Activated CD4-positive, alpha-beta T cell treated with anti-CD3 and anti-CD28 coated beads, Interleukin-2, amount 10 ng/mL, durations not matched to agents 24 days and 14 days (primary cell): ENCODE measurements at regions of chr9 and their contacts with region 1.

Region 1: GRCh38 chr9:88388172-88388885 is at the start of gene SPIN1:
- DNase-seq: peak; percentile 95
- H3K4me3 Mint-ChIP-seq: peak within 1 kb of the TSS; percentile 92
- H3K27ac Mint-ChIP-seq: peak within 1 kb of the TSS; percentile 96
- H3K4me1 Mint-ChIP-seq: peaks cover 29% of the 10 kb centered on the region
- H3K27me3 Mint-ChIP-seq: peaks cover 1% of the 10 kb centered on the region
- total RNA-seq, gene SPIN1: 29.5 and 31.4 TPM in 2 replicates

Region 2: DNA sequence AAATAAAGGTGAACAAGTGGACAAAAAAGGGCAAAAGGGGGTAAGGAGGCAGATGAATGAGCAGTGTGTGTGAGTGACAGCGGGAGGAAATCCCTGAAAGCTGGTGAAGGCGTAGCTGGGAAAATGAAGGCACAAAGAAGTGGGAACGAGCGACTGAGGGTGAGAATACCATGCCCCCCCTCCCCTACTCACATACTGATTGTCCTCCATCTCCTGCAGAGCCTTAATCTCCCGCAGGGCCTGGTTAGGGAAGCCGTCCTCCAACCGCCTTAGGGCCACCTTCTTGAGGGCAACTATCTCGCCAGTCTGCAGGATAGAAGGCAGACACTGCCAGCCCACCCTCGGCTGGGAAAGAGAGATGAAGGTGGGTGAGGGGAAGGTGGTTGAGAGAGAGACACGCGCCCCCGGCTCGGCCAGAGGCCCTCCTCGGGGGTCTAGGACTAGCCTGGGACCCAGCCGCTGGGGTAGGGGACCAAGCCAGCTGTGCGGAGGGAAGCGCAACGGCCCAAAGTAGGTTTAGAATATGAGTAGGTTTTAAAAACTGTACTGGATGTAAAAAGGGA is 414.5 kb before region 1 on chr9:
- intact Hi-C with region 1: loop called (anchors 1 kb)
- DNase-seq: no peak
- H3K4me3 Mint-ChIP-seq: peak overlapping the region; percentile 95
- H3K27ac Mint-ChIP-seq: peak overlapping the region; percentile 92
- H3K4me1 Mint-ChIP-seq: peaks cover 12% of the 10 kb centered on the region
- H3K27me3 Mint-ChIP-seq: peaks cover 8% of the 10 kb centered on the region

Region 3: DNA sequence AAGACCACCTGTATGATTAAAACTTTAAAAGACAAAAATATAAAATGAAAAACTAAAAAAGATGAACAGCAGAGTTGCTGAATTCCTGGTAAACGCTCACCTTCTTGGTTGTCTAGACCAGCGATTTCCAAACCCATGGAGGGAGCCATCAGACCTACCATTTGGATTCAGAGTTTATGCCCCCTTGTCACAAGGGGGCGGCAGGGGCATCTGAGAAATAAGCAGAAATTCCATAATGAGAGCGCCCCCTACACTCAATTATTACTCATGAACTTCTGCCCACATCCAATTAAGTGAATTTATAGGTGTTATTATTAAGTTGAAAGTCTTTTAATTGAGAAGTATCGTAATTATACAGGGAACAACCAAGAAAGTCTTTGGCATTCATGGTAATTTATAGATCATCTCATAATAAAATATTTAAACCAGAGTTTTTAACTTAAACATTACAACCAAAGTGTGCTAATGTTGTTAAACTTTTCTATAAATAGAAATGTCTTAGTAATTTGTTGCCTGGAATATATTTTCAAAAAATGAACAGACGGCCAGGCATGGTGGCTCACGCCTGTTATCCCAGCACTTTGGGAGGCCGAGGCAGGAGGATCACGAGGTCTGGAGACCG is 214.8 kb before region 1 on chr9:
- intact Hi-C with region 1: loop called (anchors 10 kb)
- DNase-seq: peak; percentile 82
- H3K4me3 Mint-ChIP-seq: no peak overlapping the region
- H3K27ac Mint-ChIP-seq: no peak overlapping the region
- H3K4me1 Mint-ChIP-seq: peaks cover 5% of the 10 kb centered on the region
- H3K27me3 Mint-ChIP-seq: peaks cover 33% of the 10 kb centered on the region

Region 4: GRCh38 chr9:88313364-88314220 is 74.7 kb before region 1 on chr9:
- intact Hi-C with region 1: loop called (anchors 2 kb)
- DNase-seq: no peak
- H3K4me3 Mint-ChIP-seq: peak overlapping the region; percentile 39
- H3K27ac Mint-ChIP-seq: peak overlapping the region; percentile 86
- H3K4me1 Mint-ChIP-seq: peaks cover 45% of the 10 kb centered on the region
- H3K27me3 Mint-ChIP-seq: no peaks in the 10 kb centered on the region

Region 5: GRCh38 chr9:88476491-88477271 is 88.4 kb after region 1 on chr9:
- intact Hi-C with region 1: loop called (anchors 2 kb)
- DNase-seq: peak; percentile 58
- H3K4me3 Mint-ChIP-seq: no peak overlapping the region
- H3K27ac Mint-ChIP-seq: peak overlapping the region; percentile 79
- H3K4me1 Mint-ChIP-seq: peaks cover 15% of the 10 kb centered on the region
- H3K27me3 Mint-ChIP-seq: no peaks in the 10 kb centered on the region

Region 6: GRCh38 chr9:88628114-88628513 is 239.8 kb after region 1 on chr9:
- intact Hi-C with region 1: no loop called
- DNase-seq: no peak
- H3K4me3 Mint-ChIP-seq: no peak overlapping the region
- H3K27ac Mint-ChIP-seq: no peak overlapping the region
- H3K4me1 Mint-ChIP-seq: no peaks in the 10 kb centered on the region
- H3K27me3 Mint-ChIP-seq: no peaks in the 10 kb centered on the region

Region 7: DNA sequence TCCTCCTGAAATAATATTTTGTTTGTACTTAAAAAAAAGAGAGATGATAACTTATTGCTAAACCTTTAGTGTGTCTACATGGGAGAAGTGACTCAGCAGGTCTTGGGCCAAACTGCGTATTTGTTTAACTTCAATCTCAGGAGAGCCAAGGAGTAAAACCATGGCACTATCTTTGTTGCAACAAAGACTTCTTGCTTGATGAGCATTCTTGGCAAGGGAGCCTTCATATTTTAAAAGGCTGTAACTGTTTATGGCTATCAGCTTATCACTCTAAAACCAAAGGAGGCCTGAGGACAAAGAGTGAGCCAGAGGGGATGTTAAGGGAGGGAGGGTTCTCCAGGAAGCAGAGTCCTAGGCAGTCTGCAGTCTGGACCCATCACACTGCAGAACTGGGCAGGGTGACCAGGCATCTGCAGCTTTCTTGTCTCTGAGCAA is 386.7 kb after region 1 on chr9:
- intact Hi-C with region 1: no loop called
- DNase-seq: peak; percentile 40
- H3K4me3 Mint-ChIP-seq: no peak overlapping the region
- H3K27ac Mint-ChIP-seq: no peak overlapping the region
- H3K4me1 Mint-ChIP-seq: no peaks in the 10 kb centered on the region
- H3K27me3 Mint-ChIP-seq: peaks cover 11% of the 10 kb centered on the region